Activated CD4-positive, alpha-beta T cell treated with anti-CD3 and anti-CD28 coated beads, Interleukin-2, amount 10 ng/mL, durations not matched to agents 7 days and 5 days (primary cell): ENCODE measurements at regions of chr1 and their contacts with region 1.

Region 1: GRCh38 chr1:23619299-23620188 is 60.2 kb upstream of the ID3 start:
- DNase-seq: peak; percentile 76
- H3K4me3 Mint-ChIP-seq: peak overlapping the region; percentile 68
- H3K27ac Mint-ChIP-seq: peak overlapping the region; percentile 94
- H3K4me1 Mint-ChIP-seq: peaks cover 88% of the 10 kb centered on the region
- H3K27me3 Mint-ChIP-seq: no peaks in the 10 kb centered on the region

Region 2: GRCh38 chr1:23591460-23592208 is 27.9 kb before region 1 on chr1:
- CTCF ChIA-PET with region 1: interaction called, 12 read pairs
- POLR2A ChIA-PET with region 1: no interaction called
- DNase-seq: peak; percentile 30
- H3K4me3 Mint-ChIP-seq: no peak overlapping the region
- H3K27ac Mint-ChIP-seq: peak overlapping the region; percentile 85
- H3K4me1 Mint-ChIP-seq: peaks cover 56% of the 10 kb centered on the region
- H3K27me3 Mint-ChIP-seq: no peaks in the 10 kb centered on the region

Region 3: DNA sequence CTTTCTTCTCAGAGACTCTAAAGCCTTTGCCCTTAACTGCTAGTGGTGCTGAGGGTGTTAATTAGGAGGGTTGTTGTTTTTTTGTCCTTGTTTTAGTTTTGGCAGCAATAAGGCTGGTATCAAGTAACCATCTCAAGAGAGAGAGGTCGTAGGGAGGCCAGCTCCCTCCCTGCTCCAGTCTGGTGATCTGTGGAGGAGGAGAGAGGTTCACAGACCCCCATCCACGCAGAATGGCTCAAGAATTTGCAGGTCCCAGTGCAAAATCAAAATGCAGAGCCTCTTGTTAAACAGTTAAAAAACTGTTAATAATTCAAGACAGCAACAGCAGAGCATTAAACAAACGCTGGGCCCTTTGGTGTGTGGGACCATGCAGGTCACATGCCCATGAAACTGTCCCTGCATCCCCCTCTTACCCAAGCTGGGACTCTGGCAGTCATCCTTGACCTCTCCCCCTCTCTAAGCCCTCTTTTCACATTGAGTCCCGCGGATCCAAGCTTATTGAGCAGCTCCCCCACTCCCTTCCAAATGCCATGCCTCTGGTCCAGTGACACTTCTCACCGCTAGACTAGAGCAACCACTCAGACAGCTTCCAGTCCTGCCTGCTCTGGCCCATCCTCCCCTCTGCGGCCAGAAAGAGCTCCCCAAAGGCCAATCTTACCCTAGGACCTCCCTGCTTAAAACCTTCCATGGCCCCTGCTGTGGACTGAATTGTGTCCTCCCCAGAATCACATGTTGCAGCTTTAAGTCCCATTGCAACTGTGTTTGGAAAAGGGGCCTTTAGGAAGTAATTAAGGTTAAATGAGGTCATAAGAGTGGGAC is 24.4 kb after region 1 on chr1:
- CTCF ChIA-PET with region 1: no interaction called
- POLR2A ChIA-PET with region 1: no interaction called
- DNase-seq: no peak
- H3K4me3 Mint-ChIP-seq: no peak overlapping the region
- H3K27ac Mint-ChIP-seq: no peak overlapping the region
- H3K4me1 Mint-ChIP-seq: no peaks in the 10 kb centered on the region
- H3K27me3 Mint-ChIP-seq: no peaks in the 10 kb centered on the region